Mammary epithelial cell (primary cell): ENCODE measurements at regions of chr19 and their contacts with region 1.

Region 1: DNA sequence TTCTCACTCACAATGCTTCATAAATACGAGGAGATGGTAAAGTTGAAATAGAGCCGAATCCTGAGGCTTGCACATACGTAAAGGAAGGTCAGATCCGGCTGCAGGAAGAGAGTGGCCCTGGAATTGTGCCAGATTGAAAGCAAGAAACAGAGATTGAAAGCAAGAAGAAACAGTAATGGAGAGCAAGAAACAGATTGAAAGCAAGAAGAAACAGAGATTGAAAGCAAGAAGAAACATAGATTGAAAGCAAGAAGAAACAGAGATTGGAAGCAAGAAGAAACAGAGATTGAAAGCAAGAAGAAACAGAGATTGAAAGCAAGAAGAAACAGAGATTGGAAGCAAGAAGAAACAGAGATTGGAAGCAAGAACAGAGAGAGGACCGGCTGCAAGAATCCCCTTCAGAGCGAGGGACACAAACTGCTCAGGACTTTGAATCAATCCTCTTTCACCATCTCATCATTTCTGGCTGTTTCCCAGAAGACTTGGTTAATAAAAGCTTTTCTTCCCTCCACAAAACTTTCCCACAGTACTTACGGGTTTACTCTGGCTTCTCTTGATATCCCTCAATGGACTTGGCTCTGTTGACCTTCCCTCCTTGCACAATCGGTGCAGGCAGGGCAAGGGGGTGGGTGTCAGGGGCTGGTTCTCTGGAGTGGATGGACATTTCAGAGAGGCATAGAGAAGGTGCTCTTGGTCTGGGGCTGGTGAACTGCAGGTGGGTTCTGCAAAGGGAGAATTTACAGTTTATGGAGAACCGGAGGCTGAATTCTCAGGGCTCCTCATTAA is 25.5 kb downstream of the OR7A5 start:
- DNase-seq: no peak
- H3K4me3 ChIP-seq: no peak overlapping the region
- H3K27ac ChIP-seq: no peak overlapping the region
- H3K4me1 ChIP-seq: no peaks in the 10 kb centered on the region
- H3K27me3 ChIP-seq: no peaks in the 10 kb centered on the region
- CTCF ChIP-seq: no peak

Region 2: DNA sequence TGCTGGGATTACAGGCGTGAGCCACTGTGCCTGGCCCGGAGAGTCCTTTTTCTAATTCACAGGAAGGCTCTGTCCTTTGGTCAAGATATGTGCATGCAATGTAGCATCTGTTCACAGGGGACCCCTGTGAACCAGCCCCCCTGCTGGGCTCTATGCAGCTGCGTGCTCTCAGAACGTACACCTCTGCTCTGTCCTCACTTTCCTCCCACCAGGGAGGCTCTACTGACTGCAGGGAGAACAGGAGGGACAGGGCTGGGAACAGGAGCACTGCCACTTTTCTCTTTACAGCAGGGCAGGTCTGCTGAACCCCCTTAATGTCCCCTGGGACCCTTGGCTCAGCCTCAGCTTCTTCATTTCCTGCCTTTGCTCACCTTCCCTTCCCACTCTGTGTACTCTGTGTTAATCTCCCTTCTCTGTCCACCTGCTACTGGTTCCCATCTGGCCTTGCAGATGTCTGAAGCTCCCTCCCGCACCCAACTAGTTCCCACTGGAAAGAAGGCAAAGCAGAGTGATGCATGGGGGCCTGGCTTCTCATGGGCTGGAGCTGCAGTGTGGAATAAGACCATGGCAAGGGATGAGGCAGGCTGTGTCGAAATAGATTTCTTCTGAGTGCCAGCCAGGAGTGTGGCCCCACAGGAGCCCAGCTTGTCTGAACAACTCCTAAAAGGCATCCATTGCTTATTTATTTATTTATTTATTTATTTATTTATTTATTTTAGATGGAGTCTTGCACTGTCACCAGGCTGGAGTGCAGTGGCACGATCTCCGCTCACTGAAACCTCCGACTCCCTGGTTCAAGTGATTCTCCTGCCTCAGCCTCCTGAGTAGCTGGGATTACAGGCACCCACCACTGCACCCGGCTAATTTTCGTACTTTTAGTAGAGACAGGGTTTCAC is 38.3 kb before region 1 on chr19:
- CTCF ChIA-PET with region 1: no interaction called
- dilution Hi-C with region 1: no loop called
- in situ Hi-C with region 1: no loop called
- intact Hi-C with region 1: no loop called
- DNase-seq: no peak
- H3K4me3 ChIP-seq: no peak overlapping the region
- H3K27ac ChIP-seq: no peak overlapping the region
- H3K4me1 ChIP-seq: no peaks in the 10 kb centered on the region
- H3K27me3 ChIP-seq: no peaks in the 10 kb centered on the region
- CTCF ChIP-seq: no peak

Region 3: DNA sequence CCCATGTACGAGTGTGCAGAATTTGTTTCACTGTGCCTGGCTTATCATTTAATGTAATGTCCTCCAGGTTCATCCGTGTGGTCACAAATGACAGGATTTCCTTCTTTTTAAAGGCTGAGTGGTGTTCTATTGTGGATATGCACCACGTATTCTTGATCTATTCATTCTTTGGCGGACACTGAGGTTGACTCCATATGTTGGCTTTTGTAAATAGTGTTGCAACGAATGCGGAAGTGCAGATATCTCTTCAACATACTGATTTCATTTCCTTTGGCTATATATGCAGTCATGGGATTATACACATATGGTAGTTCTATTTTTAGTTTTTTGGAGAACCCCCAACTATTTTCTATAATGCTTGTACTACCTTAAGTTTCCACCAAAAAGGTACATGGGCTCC is 12.5 kb after region 1 on chr19:
- CTCF ChIA-PET with region 1: no interaction called
- dilution Hi-C with region 1: no loop called
- in situ Hi-C with region 1: no loop called
- intact Hi-C with region 1: no loop called
- DNase-seq: no peak
- H3K4me3 ChIP-seq: no peak overlapping the region
- H3K27ac ChIP-seq: no peak overlapping the region
- H3K4me1 ChIP-seq: peaks cover 24% of the 10 kb centered on the region
- H3K27me3 ChIP-seq: no peaks in the 10 kb centered on the region
- CTCF ChIP-seq: no peak

Region 4: GRCh38 chr19:14901675-14902260 is 92.3 kb after region 1 on chr19:
- CTCF ChIA-PET with region 1: no interaction called
- dilution Hi-C with region 1: loop called (anchors 5 kb)
- in situ Hi-C with region 1: no loop called
- intact Hi-C with region 1: no loop called
- DNase-seq: peak; percentile 17
- H3K4me3 ChIP-seq: no peak overlapping the region
- H3K27ac ChIP-seq: no peak overlapping the region
- H3K4me1 ChIP-seq: no peaks in the 10 kb centered on the region
- H3K27me3 ChIP-seq: no peaks in the 10 kb centered on the region
- CTCF ChIP-seq: no peak

Region 5: GRCh38 chr19:14979476-14980255 is 170.2 kb after region 1 on chr19 and contains the start of gene SLC1A6:
- CTCF ChIA-PET with region 1: no interaction called
- dilution Hi-C with region 1: no loop called
- in situ Hi-C with region 1: no loop called
- intact Hi-C with region 1: no loop called
- DNase-seq: peak; percentile 21
- H3K4me3 ChIP-seq: peak within 1 kb of the TSS; percentile 57 to 80 (median 71)
- H3K27ac ChIP-seq: no peak within 1 kb of the TSS
- H3K4me1 ChIP-seq: peaks cover 18% of the 10 kb centered on the region
- H3K27me3 ChIP-seq: no peaks in the 10 kb centered on the region
- CTCF ChIP-seq: no peak
- total RNA-seq, gene SLC1A6: 1.2 to 15.5 TPM